Gastrocnemius medialis (tissue), 4 donors: ENCODE measurements at regions of chr10 and their contacts with region 1.

Region 1: GRCh38 chr10:19819419-19820033 is 3.3 kb downstream of the PLXDC2 start:
- DNase-seq: peak; percentile 18 to 27
- ATAC-seq: peak in 1 of 2 donors; percentile 28
- H3K4me3 ChIP-seq: peak overlapping the region; percentile 59 to 76 (median 76)
- H3K27ac ChIP-seq: peak overlapping the region in 3 of 4 donors; percentile 75 to 82 (median 76)
- H3K4me1 ChIP-seq: peaks cover 0 to 10% of the 10 kb centered on the region in 2 donors
- H3K27me3 ChIP-seq: peaks cover 0 to 6% (median 3%) of the 10 kb centered on the region in 3 donors
- CTCF ChIP-seq: peak; percentile 51 to 77 (median 62)
- POLR2A ChIP-seq: peak in 1 of 2 donors; percentile 18

Region 2: GRCh38 chr10:18659120-18659818 is 1160.3 kb before region 1 on chr10 and contains the start of gene ARL5B:
- in situ Hi-C with region 1: loop called in 1 of 4 experiments (anchors 25 kb)
- intact Hi-C with region 1: no loop called
- DNase-seq: peak; percentile 97
- ATAC-seq: peak; percentile 94 to 98
- H3K4me3 ChIP-seq: peak within 1 kb of the TSS; percentile 79 to 98 (median 91)
- H3K27ac ChIP-seq: peak within 1 kb of the TSS; percentile 94 to 96 (median 96)
- H3K4me1 ChIP-seq: peaks cover 20 to 27% of the 10 kb centered on the region in 2 donors
- H3K27me3 ChIP-seq: no peaks in the 10 kb centered on the region
- CTCF ChIP-seq: no peak
- POLR2A ChIP-seq: peak; percentile 87 to 88
- total RNA-seq, gene ARL5B: 5.8 to 6.7 (median 6.4) TPM

Region 3: GRCh38 chr10:19930936-19931893 is 111.7 kb after region 1 on chr10:
- in situ Hi-C with region 1: no loop called
- intact Hi-C with region 1: loop called (anchors 5 kb)
- DNase-seq: peak; percentile 27 to 43
- ATAC-seq: peak; percentile 72 to 95
- H3K4me3 ChIP-seq: peak overlapping the region in 2 of 4 donors; percentile 1 to 3
- H3K27ac ChIP-seq: peak overlapping the region; percentile 70 to 87 (median 74)
- H3K4me1 ChIP-seq: peaks cover 19 to 29% of the 10 kb centered on the region in 2 donors
- H3K27me3 ChIP-seq: no peaks in the 10 kb centered on the region
- CTCF ChIP-seq: no peak
- POLR2A ChIP-seq: no peak

Region 4: GRCh38 chr10:20002657-20003056 is 183.1 kb after region 1 on chr10:
- in situ Hi-C with region 1: no loop called
- intact Hi-C with region 1: loop called (anchors 2 kb)
- DNase-seq: no peak
- ATAC-seq: peak; percentile 18 to 53
- H3K4me3 ChIP-seq: no peak overlapping the region
- H3K27ac ChIP-seq: peak overlapping the region; percentile 44 to 72 (median 62)
- H3K4me1 ChIP-seq: peaks cover 9 to 31% of the 10 kb centered on the region in 2 donors
- H3K27me3 ChIP-seq: no peaks in the 10 kb centered on the region
- CTCF ChIP-seq: no peak
- POLR2A ChIP-seq: no peak

Region 5: GRCh38 chr10:20466731-20467130 is 647.2 kb after region 1 on chr10:
- in situ Hi-C with region 1: no loop called
- intact Hi-C with region 1: no loop called
- DNase-seq: peak in 1 of 2 donors; percentile 13
- ATAC-seq: no peak
- H3K4me3 ChIP-seq: no peak overlapping the region
- H3K27ac ChIP-seq: no peak overlapping the region
- H3K4me1 ChIP-seq: no peaks in the 10 kb centered on the region
- H3K27me3 ChIP-seq: no peaks in the 10 kb centered on the region
- CTCF ChIP-seq: no peak
- POLR2A ChIP-seq: no peak

Region 6: GRCh38 chr10:20622531-20623232 is 803.2 kb after region 1 on chr10:
- in situ Hi-C with region 1: no loop called
- intact Hi-C with region 1: loop called (anchors 10 kb)
- DNase-seq: no peak
- ATAC-seq: no peak
- H3K4me3 ChIP-seq: no peak overlapping the region
- H3K27ac ChIP-seq: peak overlapping the region in 3 of 4 donors; percentile 25 to 60 (median 43)
- H3K4me1 ChIP-seq: peaks cover 0 to 8% of the 10 kb centered on the region in 2 donors
- H3K27me3 ChIP-seq: no peaks in the 10 kb centered on the region
- CTCF ChIP-seq: no peak
- POLR2A ChIP-seq: no peak

Region 7: DNA sequence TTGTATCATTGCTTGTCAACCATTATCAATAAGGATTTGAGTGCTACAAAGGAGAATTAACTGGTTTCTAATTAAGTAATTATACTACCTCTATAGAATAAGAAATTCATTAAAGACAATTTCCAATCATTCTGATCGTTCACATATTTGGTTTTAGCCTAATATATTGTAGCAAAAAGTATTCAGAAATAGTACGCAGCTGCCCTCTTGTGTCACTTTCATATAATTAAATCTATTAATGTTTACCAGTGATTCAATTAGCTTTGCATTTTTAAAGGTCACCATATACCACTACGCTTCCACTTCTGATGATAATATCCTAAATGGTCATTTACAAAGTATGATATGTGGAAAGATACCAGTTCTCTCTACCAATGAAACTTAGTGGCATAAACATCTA is 949.3 kb after region 1 on chr10:
- in situ Hi-C with region 1: loop called in 2 of 4 experiments (anchors 10 kb)
- intact Hi-C with region 1: loop called (anchors 5 kb)
- DNase-seq: no peak
- ATAC-seq: no peak
- H3K4me3 ChIP-seq: no peak overlapping the region
- H3K27ac ChIP-seq: no peak overlapping the region
- H3K4me1 ChIP-seq: no peaks in the 10 kb centered on the region
- H3K27me3 ChIP-seq: no peaks in the 10 kb centered on the region
- CTCF ChIP-seq: peak in 3 of 5 experiments; percentile 13 to 34 (median 32)
- POLR2A ChIP-seq: no peak